MCF 10A (cell line): ENCODE measurements at regions of chr9 and their contacts with region 1.

Region 1: GRCh38 chr9:114653556-114654159 is 3.9 kb downstream of the TEX53 start:
- DNase-seq: peak; percentile 79
- H3K4me3 Mint-ChIP-seq: no peak overlapping the region
- H3K27ac Mint-ChIP-seq: no peak overlapping the region
- H3K4me1 Mint-ChIP-seq: no peaks in the 10 kb centered on the region
- H3K27me3 Mint-ChIP-seq: no peaks in the 10 kb centered on the region
- CTCF ChIP-seq: peak; percentile 83

Region 2: GRCh38 chr9:114339130-114339908 is 314.3 kb before region 1 on chr9:
- CTCF ChIA-PET with region 1: interaction called, 8 read pairs
- POLR2A ChIA-PET with region 1: no interaction called
- intact Hi-C with region 1: loop called (anchors 1 kb)
- DNase-seq: peak; percentile 60
- H3K4me3 Mint-ChIP-seq: no peak overlapping the region
- H3K27ac Mint-ChIP-seq: no peak overlapping the region
- H3K4me1 Mint-ChIP-seq: no peaks in the 10 kb centered on the region
- H3K27me3 Mint-ChIP-seq: no peaks in the 10 kb centered on the region
- CTCF ChIP-seq: peak; percentile 89

Region 3: GRCh38 chr9:114442022-114442421 is 211.6 kb before region 1 on chr9:
- CTCF ChIA-PET with region 1: interaction called, 158 read pairs
- POLR2A ChIA-PET with region 1: interaction called, 6 read pairs
- intact Hi-C with region 1: no loop called
- DNase-seq: no peak
- H3K4me3 Mint-ChIP-seq: no peak overlapping the region
- H3K27ac Mint-ChIP-seq: no peak overlapping the region
- H3K4me1 Mint-ChIP-seq: peaks cover 15% of the 10 kb centered on the region
- H3K27me3 Mint-ChIP-seq: no peaks in the 10 kb centered on the region
- CTCF ChIP-seq: no peak

Region 4: GRCh38 chr9:114511968-114512874 is 141.4 kb before region 1 on chr9:
- CTCF ChIA-PET with region 1: interaction called, 27 read pairs
- POLR2A ChIA-PET with region 1: no interaction called
- intact Hi-C with region 1: loop called (anchors 1 kb)
- DNase-seq: no peak
- H3K4me3 Mint-ChIP-seq: no peak overlapping the region
- H3K27ac Mint-ChIP-seq: no peak overlapping the region
- H3K4me1 Mint-ChIP-seq: peaks cover 8% of the 10 kb centered on the region
- H3K27me3 Mint-ChIP-seq: peaks cover 37% of the 10 kb centered on the region
- CTCF ChIP-seq: no peak

Region 5: GRCh38 chr9:114551883-114552685 is 101.6 kb before region 1 on chr9:
- CTCF ChIA-PET with region 1: interaction called, 13 read pairs
- POLR2A ChIA-PET with region 1: interaction called, 3 read pairs
- intact Hi-C with region 1: no loop called
- DNase-seq: peak; percentile 97
- H3K4me3 Mint-ChIP-seq: no peak overlapping the region
- H3K27ac Mint-ChIP-seq: peak overlapping the region; percentile 91
- H3K4me1 Mint-ChIP-seq: peaks cover 18% of the 10 kb centered on the region
- H3K27me3 Mint-ChIP-seq: peaks cover 8% of the 10 kb centered on the region
- CTCF ChIP-seq: no peak

Region 6: GRCh38 chr9:114681594-114682332 is 28.1 kb after region 1 on chr9 and contains the start of gene TEX48:
- CTCF ChIA-PET with region 1: interaction called, 59 read pairs
- POLR2A ChIA-PET with region 1: interaction called, 3 read pairs
- intact Hi-C with region 1: no loop called
- DNase-seq: peak; percentile 90
- H3K4me3 Mint-ChIP-seq: no peak within 1 kb of the TSS
- H3K27ac Mint-ChIP-seq: no peak within 1 kb of the TSS
- H3K4me1 Mint-ChIP-seq: peaks cover 32% of the 10 kb centered on the region
- H3K27me3 Mint-ChIP-seq: no peaks in the 10 kb centered on the region
- CTCF ChIP-seq: peak; percentile 84
- total RNA-seq, gene TEX48: not detected in 2 replicates